ENCODE measurements at regions of chr12 and their contacts with region 1.

Region 1: GRCh38 chr12:94889445-94890210 is 113.9 kb downstream of the NDUFA12 start:
- DNase-seq: no peak
- H3K4me3 Mint-ChIP-seq: no peak overlapping the region
- H3K27ac Mint-ChIP-seq: no peak overlapping the region
- H3K4me1 Mint-ChIP-seq: no peaks in the 10 kb centered on the region
- H3K27me3 Mint-ChIP-seq: peaks cover 3% of the 10 kb centered on the region

Region 2: DNA sequence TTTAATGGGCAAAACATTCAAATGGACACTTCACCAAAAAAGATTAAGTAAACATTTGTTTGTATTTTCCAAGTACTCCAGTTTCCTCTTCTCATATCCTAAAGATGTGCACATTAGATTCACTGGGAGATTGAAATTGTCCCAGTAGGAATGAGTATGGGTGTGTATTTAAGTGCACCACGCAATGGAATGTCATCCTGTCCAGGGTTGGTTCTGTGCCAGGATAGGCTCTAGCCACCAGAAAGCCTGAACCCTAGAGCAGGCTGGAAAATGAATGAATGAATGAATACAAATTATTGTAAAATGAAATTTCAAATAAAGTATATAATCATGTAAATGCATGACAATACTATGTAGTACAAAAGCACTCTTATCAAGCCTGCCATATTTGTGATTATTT is 444.0 kb before region 1 on chr12:
- intact Hi-C with region 1: no loop called
- DNase-seq: no peak
- H3K4me3 Mint-ChIP-seq: no peak overlapping the region
- H3K27ac Mint-ChIP-seq: no peak overlapping the region
- H3K4me1 Mint-ChIP-seq: peaks cover 12% of the 10 kb centered on the region
- H3K27me3 Mint-ChIP-seq: no peaks in the 10 kb centered on the region

Region 3: GRCh38 chr12:94525951-94526350 is 363.7 kb before region 1 on chr12:
- intact Hi-C with region 1: no loop called
- DNase-seq: no peak
- H3K4me3 Mint-ChIP-seq: no peak overlapping the region
- H3K27ac Mint-ChIP-seq: no peak overlapping the region
- H3K4me1 Mint-ChIP-seq: peaks cover 3% of the 10 kb centered on the region
- H3K27me3 Mint-ChIP-seq: peaks cover 30% of the 10 kb centered on the region

Region 4: GRCh38 chr12:94954029-94954685 is 64.5 kb after region 1 on chr12:
- intact Hi-C with region 1: loop called (anchors 10 kb)
- DNase-seq: no peak
- H3K4me3 Mint-ChIP-seq: no peak overlapping the region
- H3K27ac Mint-ChIP-seq: no peak overlapping the region
- H3K4me1 Mint-ChIP-seq: peaks cover 3% of the 10 kb centered on the region
- H3K27me3 Mint-ChIP-seq: peaks cover 36% of the 10 kb centered on the region

Region 5: DNA sequence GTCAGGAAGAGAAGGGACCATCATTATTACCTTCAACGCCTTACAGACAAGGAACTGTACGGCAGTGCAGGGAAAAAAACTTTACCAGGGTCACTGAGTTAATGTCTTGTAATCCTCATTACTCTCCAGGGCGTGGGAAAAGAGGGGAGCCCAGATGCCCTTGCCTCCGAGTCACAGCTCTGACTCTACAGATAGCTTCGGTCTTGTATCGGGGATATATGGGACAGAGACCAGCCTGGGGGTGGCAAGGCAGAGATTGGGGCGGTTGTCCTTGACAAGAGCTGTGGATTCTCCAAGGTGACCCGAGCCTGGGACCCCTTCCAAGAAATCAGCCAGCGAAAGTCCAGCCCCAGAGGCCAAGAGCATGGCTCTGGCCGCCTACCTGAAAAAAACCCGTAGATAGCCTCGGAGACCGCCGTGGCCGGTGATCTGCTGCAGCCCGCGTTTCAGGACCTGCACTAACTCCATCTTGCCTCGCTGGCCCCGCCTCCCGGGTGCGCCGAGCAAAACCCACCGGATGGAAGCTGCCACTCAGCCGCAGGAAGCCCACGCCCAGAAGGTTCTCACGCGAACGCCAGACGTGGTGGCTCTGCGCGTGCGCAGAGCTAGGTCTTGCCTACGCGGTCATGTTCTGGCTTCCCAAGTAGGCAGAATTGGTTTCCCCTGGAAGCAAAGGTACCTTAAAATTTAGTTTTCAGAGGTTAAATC is 113.7 kb after region 1 on chr12 and contains the start of gene NDUFA12:
- intact Hi-C with region 1: no loop called
- DNase-seq: peak; percentile 92
- H3K4me3 Mint-ChIP-seq: peak within 1 kb of the TSS; percentile 90
- H3K27ac Mint-ChIP-seq: peak within 1 kb of the TSS; percentile 84
- H3K4me1 Mint-ChIP-seq: peaks cover 27% of the 10 kb centered on the region
- H3K27me3 Mint-ChIP-seq: no peaks in the 10 kb centered on the region
- total RNA-seq, gene NDUFA12: 117 and 118 TPM in 2 replicates

Region 6: GRCh38 chr12:95072900-95073697 is 183.5 kb after region 1 on chr12 and contains the start of gene NR2C1:
- intact Hi-C with region 1: no loop called
- DNase-seq: peak; percentile 90
- H3K4me3 Mint-ChIP-seq: peak within 1 kb of the TSS; percentile 91
- H3K27ac Mint-ChIP-seq: peak within 1 kb of the TSS; percentile 85
- H3K4me1 Mint-ChIP-seq: peaks cover 13% of the 10 kb centered on the region
- H3K27me3 Mint-ChIP-seq: peaks cover 5% of the 10 kb centered on the region
- total RNA-seq, gene NR2C1: 28.5 and 30.0 TPM in 2 replicates